ENCODE measurements at regions of chr2 and their contacts with region 1.

Region 1: DNA sequence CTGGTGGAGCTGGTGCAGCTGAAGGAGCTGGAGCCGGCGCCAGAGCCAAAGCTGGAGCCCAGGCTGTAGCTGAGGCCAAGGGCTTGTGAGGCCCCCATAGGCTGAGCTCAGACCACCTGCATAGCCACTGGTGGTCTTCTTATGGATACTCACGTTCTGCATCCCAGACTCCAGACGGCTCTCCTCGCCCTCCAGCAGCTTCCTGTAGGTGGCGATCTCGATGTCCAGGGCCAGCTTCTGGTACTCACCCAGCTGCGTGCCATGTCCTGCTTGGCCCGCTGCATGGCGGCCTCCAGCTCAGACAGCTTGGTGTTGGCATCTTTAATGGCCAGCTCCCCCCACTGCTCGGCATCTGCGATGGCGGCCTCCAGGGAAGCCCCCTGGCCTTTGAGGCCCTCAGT is 6.0 kb upstream of the CDK5R2 start:
- DNase-seq: no peak

Region 2: DNA sequence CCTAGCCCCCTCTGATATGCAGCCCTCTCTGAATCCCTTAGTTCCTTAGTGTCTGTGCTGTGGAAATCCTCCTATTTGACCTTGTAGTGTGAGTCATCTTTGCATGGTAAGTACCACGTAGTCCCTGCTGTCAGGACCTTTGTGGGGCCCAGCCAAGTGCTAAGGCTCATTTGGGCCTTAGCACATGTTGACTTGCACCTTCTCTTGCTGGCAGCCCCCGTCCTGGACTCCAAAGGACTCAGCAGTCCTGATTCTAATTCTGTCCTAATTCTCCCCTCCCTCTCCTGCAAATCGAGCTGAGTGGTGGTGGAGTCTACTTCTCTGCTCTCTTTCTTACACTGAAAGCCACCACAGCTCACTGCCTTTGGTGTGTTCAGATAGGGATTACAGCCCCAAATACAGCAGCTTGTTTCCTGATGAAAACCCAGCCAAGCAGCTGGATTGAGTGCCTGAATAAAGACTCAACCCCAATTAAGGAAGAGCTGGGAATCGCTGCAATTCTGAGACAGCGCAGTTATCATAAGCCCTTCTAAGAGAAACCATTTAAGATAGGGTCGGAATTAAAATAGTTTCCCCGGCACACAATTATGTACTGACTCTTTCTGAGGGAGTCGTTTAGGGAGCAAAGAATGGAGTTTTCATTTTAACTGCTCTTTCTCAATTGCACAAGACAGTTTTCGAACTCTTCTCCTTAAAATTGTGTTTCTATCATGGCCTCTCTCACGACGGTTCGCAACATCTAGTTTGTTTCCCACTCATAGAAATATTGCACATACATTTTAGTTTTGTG is 1878.0 kb before region 1 on chr2:
- intact Hi-C with region 1: no loop called
- DNase-seq: peak; percentile 80

Region 3: GRCh38 chr2:217756375-217757107 is 1196.9 kb before region 1 on chr2:
- intact Hi-C with region 1: no loop called
- DNase-seq: peak; percentile 91

Region 4: DNA sequence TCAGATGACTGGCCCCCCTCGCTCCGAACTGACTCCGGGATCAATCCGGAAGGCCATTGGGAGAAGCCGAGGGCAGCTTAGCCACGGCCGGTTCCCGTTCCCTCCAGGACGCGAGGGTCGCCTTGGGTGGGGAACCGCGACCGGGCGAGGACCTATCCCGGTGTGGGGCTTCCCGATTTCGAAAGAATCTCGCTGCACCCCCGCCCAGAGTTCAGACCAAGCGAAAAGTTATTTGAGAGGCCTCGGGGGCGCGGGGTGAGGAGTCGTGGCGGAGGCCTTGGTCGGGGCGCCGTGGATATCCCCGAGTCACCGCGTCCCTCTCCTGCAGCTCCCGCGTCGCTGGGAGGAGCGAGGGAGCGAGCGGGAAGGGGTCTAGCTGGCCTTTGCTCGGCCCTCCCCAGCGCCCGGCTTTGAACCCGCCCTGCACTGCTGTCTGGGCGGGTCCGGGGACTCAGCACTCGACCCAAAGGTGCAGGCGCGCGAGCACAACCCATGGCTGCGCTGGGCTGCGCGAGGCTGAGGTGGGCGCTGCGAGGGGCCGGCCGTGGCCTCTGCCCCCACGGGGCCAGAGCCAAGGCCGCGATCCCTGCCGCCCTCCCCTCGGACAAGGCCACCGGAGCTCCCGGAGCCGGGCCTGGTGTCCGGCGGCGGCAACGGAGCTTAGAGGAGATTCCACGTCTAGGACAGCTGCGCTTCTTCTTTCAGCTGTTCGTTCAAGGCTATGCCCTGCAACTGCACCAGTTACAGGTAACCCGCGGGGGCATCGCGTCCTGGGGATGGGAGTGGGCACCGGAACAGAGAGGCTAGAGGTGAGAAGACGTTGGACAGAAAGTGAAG is 171.6 kb before region 1 on chr2 and contains the start of gene CYP27A1:
- intact Hi-C with region 1: no loop called
- DNase-seq: peak; percentile 86
- total RNA-seq, gene CYP27A1: 9.0 to 18.7 TPM

Region 5: GRCh38 chr2:218972737-218973136 is 19.3 kb after region 1 on chr2:
- intact Hi-C with region 1: loop called in 1 of 2 experiments (anchors 2 kb)
- DNase-seq: peak; percentile 15

Region 6: GRCh38 chr2:219362524-219363164 is 409.2 kb after region 1 on chr2:
- intact Hi-C with region 1: no loop called
- DNase-seq: no peak

Measured in posterior vena cava (tissue), 2 donors.